Stomach (tissue), 19 donors: ENCODE measurements at regions of chr14 and their contacts with region 1.

Region 1: DNA sequence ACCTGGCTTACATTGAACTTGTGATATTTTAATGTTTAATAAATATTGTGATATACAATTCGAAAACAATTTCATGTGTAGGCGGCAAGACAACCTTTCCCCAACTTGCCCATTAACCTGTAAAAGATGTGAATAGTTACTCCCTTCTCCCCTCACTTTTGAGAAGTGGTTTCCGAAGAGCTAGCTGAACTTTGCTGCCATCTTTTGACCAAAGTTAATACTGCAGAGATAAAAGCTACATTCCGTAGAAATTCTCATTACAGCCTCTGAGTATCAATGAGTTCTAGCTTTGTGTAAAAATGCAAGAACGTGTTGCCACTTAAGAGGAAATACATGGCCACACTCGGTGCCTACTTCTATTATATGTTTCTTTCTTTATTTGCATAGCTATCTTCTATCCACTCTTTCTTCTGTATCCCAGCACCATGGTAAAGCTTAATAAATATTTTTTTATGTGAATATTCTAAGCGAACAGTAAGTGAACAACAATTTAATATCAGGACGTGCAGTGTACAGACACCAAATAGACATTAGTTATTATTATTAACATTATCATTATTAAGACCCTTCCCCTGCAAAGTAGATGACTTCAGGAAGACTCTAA is 105.1 kb upstream of the TMEM260 start:
- DNase-seq: peak in 1 of 2 donors; percentile 74
- H3K4me3 ChIP-seq: no peak overlapping the region
- H3K27ac ChIP-seq: no peak overlapping the region
- H3K4me1 ChIP-seq: no peaks in the 10 kb centered on the region
- H3K27me3 ChIP-seq: no peaks in the 10 kb centered on the region
- CTCF ChIP-seq: peak in 5 of 7 experiments; percentile 53 to 75 (median 67)
- EP300 ChIP-seq: no peak
- POLR2A ChIP-seq: no peak

Region 2: GRCh38 chr14:55446218-55446654 is 1028.3 kb before region 1 on chr14:
- intact Hi-C with region 1: loop called (anchors 10 kb)
- DNase-seq: peak; percentile 53 to 83
- H3K4me3 ChIP-seq: no peak overlapping the region
- H3K27ac ChIP-seq: no peak overlapping the region
- H3K4me1 ChIP-seq: peaks cover 0 to 14% (median 7%) of the 10 kb centered on the region in 4 donors
- H3K27me3 ChIP-seq: no peaks in the 10 kb centered on the region
- CTCF ChIP-seq: peak in 5 of 7 experiments; percentile 39 to 69 (median 57)
- EP300 ChIP-seq: no peak
- POLR2A ChIP-seq: no peak